Upper lobe of right lung (tissue), 1 donor: ENCODE measurements at regions of chr4 and their contacts with region 1.

Region 1: DNA sequence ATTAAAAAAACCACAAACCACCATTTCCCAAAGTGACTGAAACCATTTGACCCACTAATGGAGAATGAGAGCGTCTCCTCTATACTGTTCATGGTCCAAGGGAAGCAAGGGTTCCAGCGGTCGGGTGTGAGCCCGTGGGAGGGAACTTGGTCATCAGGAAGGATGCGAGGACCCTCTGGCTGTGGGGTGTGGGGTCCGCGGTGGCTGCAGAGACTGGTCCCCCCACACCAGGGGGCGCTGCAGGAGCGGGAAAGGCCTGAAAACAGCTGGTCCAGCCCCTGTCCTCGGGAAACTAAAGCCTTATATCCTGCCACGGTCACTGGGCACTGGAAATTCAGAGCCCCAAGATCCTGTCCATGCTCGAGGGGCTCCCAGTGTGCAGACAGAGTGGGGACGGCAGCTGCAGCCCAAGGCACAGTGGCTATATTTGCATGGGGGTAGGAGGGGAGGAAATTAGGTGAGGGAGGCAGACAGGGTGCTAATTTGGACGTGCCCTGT is 4.3 kb downstream of the BLOC1S4 start:
- DNase-seq: peak; percentile 92
- ATAC-seq: peak; percentile 79
- H3K4me3 ChIP-seq: no peak overlapping the region
- H3K27ac ChIP-seq: no peak overlapping the region
- H3K4me1 ChIP-seq: peaks cover 16% of the 10 kb centered on the region
- H3K27me3 ChIP-seq: no peaks in the 10 kb centered on the region
- CTCF ChIP-seq: peak; percentile 94

Region 2: GRCh38 chr4:6500481-6501140 is 219.6 kb before region 1 on chr4:
- intact Hi-C with region 1: no loop called
- DNase-seq: no peak
- ATAC-seq: no peak
- H3K4me3 ChIP-seq: no peak overlapping the region
- H3K27ac ChIP-seq: no peak overlapping the region
- H3K4me1 ChIP-seq: no peaks in the 10 kb centered on the region
- H3K27me3 ChIP-seq: peaks cover 8% of the 10 kb centered on the region
- CTCF ChIP-seq: no peak

Region 3: DNA sequence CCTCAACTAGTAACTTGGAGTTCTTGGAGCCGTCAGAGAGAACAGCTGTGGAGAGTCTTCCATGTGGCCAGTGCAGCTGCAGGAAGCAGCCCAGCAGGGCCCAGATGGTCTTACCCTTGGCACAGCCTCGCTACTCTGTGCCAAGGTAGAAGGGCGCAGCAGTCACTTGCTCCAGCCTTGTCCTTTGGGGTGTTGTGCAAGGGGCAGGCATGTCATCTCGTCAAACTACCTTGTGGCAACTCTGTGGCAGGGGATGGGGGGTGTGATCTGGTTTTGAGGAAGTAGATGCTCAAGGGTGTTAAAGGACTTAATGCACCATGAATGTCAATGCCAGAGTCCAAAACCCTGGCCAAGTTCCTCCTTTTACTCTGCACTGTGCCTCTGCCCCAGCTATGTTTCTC is 155.2 kb after region 1 on chr4:
- intact Hi-C with region 1: loop called (anchors 5 kb)
- DNase-seq: peak; percentile 79
- ATAC-seq: peak; percentile 87
- H3K4me3 ChIP-seq: no peak overlapping the region
- H3K27ac ChIP-seq: no peak overlapping the region
- H3K4me1 ChIP-seq: peaks cover 21% of the 10 kb centered on the region
- H3K27me3 ChIP-seq: no peaks in the 10 kb centered on the region
- CTCF ChIP-seq: no peak

Region 4: GRCh38 chr4:7070729-7071511 is 350.7 kb after region 1 on chr4:
- intact Hi-C with region 1: loop called (anchors 10 kb)
- DNase-seq: peak; percentile 92
- ATAC-seq: peak; percentile 66
- H3K4me3 ChIP-seq: no peak overlapping the region
- H3K27ac ChIP-seq: no peak overlapping the region
- H3K4me1 ChIP-seq: peaks cover 22% of the 10 kb centered on the region
- H3K27me3 ChIP-seq: no peaks in the 10 kb centered on the region
- CTCF ChIP-seq: peak; percentile 99